Motor neuron (in vitro differentiated cells): ENCODE measurements at regions of chr15 and their contacts with region 1.

Region 1: DNA sequence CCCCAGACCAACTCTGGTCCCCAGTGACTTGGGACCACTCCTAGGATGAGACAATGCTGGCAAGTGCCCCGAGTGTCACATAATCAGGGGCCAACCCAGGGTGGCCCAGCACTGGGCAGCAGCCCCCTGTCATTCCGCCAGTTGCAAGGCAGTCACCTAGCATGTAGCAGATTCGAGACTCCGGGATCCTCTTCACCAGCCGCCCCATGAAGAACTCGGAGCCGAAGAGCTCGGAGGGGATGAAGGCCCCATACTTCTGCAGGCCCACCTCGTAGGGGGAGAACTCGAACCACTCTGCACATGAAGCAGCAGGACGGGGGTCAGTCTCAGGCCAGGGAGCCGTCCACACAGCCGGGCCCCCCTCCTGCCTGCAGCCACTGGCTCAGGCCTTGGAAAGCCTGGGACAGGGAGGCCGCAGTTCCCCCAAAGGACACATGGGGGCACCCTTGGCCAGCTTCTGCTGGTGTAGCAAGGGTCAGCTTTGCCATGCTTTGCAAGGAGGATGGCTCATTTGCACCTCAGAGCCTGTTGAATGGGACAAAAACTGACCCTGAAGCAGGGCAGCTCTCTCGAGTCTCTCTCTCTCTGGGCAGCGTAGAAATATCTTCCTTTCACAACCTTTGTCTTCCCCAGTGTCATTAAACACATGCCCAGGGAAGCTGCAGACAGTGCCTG is 17.0 kb upstream of the EHD4 start:
- ATAC-seq: peak; percentile 96 to 99 (median 97)
- H3K4me3 ChIP-seq: no peak overlapping the region
- H3K27ac ChIP-seq: no peak overlapping the region
- H3K4me1 ChIP-seq: no peaks in the 10 kb centered on the region

Region 2: GRCh38 chr15:42059661-42060476 is 70.5 kb after region 1 on chr15:
- in situ Hi-C with region 1: loop called in 1 of 9 experiments (anchors 5 kb)
- ATAC-seq: peak in 3 of 8 experiments; percentile 6 to 24 (median 20)
- H3K4me3 ChIP-seq: no peak overlapping the region
- H3K27ac ChIP-seq: no peak overlapping the region
- H3K4me1 ChIP-seq: peaks cover 0 to under 1% of the 10 kb centered on the region in 2 donors

Region 3: DNA sequence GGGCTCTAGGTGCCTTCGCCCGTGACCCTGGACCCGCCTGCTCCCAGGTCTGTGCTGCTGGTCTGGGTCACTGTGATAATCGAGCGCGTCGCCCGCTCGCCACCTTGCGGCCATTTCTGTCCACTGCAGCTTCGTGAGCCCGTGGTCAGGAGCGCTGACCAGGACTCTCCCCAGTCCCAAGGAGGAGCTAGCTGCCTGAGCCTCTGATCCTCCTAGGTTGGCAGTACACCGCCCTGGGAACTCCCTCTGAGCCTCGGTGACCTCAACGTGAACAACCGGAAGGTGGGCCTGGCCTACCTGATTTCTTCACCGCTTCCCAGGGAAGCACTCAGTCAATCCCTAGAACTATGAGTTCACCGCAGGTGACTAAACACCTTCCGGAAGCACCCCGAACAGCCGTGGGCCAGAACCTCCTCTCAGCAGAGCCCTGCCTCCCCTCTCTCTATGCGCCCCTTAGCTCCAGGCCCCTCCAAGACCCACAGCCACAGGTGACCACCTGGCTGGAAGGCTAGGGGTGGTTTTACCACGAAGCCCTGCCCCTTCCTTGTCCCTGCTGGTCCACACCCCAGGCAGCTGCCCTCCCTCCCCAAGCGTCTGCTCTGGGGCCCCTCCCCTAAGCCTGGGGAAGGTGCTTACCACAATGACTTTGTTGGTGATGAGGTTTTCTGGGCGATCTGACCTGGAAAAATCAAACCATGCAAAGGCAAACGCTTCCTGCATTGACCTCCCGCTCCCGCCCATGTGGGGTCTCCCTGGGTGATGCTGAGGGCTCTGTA is 95.3 kb after region 1 on chr15:
- in situ Hi-C with region 1: loop called in 1 of 9 experiments (anchors 10 kb)
- ATAC-seq: peak; percentile 90 to 98 (median 94)
- H3K4me3 ChIP-seq: no peak overlapping the region
- H3K27ac ChIP-seq: no peak overlapping the region
- H3K4me1 ChIP-seq: no peaks in the 10 kb centered on the region